Activated CD4-positive, alpha-beta memory T cell treated with anti-CD3 and anti-CD28 coated beads for 36 hours (primary cell): ENCODE measurements at regions of chr2 and their contacts with region 1.

Region 1: DNA sequence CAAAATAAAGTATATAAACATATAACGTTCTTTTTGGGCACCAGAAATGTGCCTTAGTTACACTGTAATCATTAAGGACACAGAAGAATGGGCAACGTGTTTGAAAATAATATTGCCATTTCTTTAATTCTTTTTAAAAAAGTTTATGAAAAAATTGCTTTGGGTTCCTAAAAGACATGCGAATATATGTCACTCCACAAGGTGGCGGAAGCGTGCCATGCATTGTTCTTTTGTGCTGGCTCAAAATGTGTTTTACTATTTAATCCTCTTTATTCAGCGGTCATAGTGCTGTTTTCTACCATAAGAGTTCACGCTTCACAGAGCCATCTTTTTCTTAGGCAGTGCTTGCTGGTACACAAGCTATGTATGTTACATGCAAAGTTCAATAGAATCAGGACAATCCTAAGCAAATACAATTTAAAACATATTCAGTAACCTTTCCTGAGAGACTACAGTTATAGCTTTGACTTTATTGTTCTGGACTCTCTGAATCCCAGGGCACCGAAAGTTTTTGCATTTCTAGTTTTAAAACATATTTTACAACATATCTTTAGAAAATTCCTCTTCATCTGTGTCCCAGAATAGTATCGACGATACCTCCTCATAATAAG is 147.8 kb upstream of the ERBB4 start:
- DNase-seq: peak; percentile 62
- H3K4me3 Mint-ChIP-seq: no peak overlapping the region
- H3K27ac Mint-ChIP-seq: no peak overlapping the region
- H3K4me1 Mint-ChIP-seq: no peaks in the 10 kb centered on the region
- H3K27me3 Mint-ChIP-seq: no peaks in the 10 kb centered on the region

Region 2: DNA sequence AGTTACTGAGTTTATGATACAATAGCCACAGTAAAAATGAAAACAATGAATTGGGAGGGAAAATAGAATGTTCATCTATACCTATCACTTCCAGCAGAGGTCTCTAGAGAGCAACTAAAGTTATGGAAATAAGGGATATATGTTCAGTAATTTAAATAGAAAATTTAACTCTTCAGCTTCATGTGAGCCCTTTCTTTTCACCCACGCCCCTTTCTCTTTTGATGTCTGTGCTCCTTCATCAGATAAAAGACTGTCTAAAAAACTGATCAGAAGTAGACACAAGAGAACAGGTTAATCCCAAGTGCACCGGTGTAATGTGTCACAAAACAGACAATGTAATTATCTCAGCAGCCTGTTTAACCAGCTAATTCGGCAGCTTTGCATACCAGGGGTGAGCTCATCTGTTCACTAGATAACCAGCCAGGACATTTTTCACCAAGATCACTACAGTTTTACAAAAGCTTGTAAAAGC is 90.7 kb after region 1 on chr2:
- CTCF ChIA-PET with region 1: no interaction called
- POLR2A ChIA-PET with region 1: no interaction called
- intact Hi-C with region 1: loop called (anchors 5 kb)
- DNase-seq: no peak
- H3K4me3 Mint-ChIP-seq: no peak overlapping the region
- H3K27ac Mint-ChIP-seq: no peak overlapping the region
- H3K4me1 Mint-ChIP-seq: no peaks in the 10 kb centered on the region
- H3K27me3 Mint-ChIP-seq: no peaks in the 10 kb centered on the region

Region 3: GRCh38 chr2:213243189-213244044 is 557.0 kb after region 1 on chr2:
- CTCF ChIA-PET with region 1: no interaction called
- POLR2A ChIA-PET with region 1: no interaction called
- intact Hi-C with region 1: loop called (anchors 2 kb)
- DNase-seq: no peak
- H3K4me3 Mint-ChIP-seq: no peak overlapping the region
- H3K27ac Mint-ChIP-seq: peak overlapping the region; percentile 36
- H3K4me1 Mint-ChIP-seq: peaks cover 7% of the 10 kb centered on the region
- H3K27me3 Mint-ChIP-seq: peaks cover 7% of the 10 kb centered on the region

Region 4: GRCh38 chr2:213551526-213551925 is 865.1 kb after region 1 on chr2:
- CTCF ChIA-PET with region 1: no interaction called
- POLR2A ChIA-PET with region 1: no interaction called
- intact Hi-C with region 1: no loop called
- DNase-seq: no peak
- H3K4me3 Mint-ChIP-seq: no peak overlapping the region
- H3K27ac Mint-ChIP-seq: no peak overlapping the region
- H3K4me1 Mint-ChIP-seq: no peaks in the 10 kb centered on the region
- H3K27me3 Mint-ChIP-seq: no peaks in the 10 kb centered on the region